ENCODE measurements at regions of chr17 and their contacts with region 1.

Region 1: DNA sequence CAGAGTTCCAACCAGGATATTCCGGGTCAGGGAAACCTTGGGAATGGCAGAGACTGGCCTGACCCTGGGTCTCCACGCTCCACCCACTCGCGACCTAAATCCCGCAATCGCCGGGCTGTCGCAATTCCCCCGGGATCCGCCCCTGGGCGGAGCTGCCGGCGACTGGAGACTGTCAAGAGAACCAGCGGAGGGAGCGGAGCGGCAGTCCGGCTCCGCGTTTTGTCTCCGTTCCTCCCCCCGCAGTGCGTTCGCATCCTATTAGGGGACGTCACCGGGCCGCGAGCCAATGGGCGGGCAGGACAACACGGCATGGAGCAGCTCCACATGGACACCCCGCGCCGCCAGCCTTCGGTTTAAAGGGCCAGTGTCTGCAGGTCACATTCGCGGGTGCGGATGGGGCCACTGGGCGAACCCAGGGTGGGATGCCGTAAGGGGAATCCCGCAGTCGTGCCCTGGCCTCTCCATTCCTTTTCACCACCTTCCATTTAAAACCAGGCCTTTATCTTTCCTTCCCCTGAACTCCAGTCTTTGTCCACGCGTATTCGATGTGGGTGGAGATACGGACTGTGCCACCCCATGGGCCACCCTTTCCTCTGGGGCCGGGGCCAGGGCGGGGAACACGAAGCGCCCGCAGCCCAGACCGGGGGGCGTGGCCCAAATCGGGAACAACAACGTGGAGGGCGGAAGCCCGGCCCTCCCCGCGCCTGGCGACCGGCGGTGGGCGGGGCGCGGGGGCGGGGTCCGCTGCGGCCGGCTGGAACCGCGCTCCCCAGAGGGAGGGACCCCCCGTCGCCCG is 764 bp upstream of the MNT start:
- DNase-seq: peak; percentile 100
- H3K4me3 Mint-ChIP-seq: peak overlapping the region; percentile 96
- H3K27ac Mint-ChIP-seq: peak overlapping the region; percentile 91
- H3K4me1 Mint-ChIP-seq: peaks cover 43% of the 10 kb centered on the region
- H3K27me3 Mint-ChIP-seq: no peaks in the 10 kb centered on the region

Region 2: GRCh38 chr17:2259769-2260536 is 141.7 kb before region 1 on chr17:
- CTCF ChIA-PET with region 1: no interaction called
- POLR2A ChIA-PET with region 1: no interaction called
- intact Hi-C with region 1: loop called (anchors 5 kb)
- DNase-seq: peak; percentile 90
- H3K4me3 Mint-ChIP-seq: peak overlapping the region; percentile 65
- H3K27ac Mint-ChIP-seq: peak overlapping the region; percentile 93
- H3K4me1 Mint-ChIP-seq: peaks cover 72% of the 10 kb centered on the region
- H3K27me3 Mint-ChIP-seq: no peaks in the 10 kb centered on the region

Region 3: GRCh38 chr17:2312736-2313135 is 88.9 kb before region 1 on chr17:
- CTCF ChIA-PET with region 1: no interaction called
- POLR2A ChIA-PET with region 1: no interaction called
- intact Hi-C with region 1: no loop called
- DNase-seq: no peak
- H3K4me3 Mint-ChIP-seq: no peak overlapping the region
- H3K27ac Mint-ChIP-seq: no peak overlapping the region
- H3K4me1 Mint-ChIP-seq: peaks cover 3% of the 10 kb centered on the region
- H3K27me3 Mint-ChIP-seq: no peaks in the 10 kb centered on the region

Region 4: DNA sequence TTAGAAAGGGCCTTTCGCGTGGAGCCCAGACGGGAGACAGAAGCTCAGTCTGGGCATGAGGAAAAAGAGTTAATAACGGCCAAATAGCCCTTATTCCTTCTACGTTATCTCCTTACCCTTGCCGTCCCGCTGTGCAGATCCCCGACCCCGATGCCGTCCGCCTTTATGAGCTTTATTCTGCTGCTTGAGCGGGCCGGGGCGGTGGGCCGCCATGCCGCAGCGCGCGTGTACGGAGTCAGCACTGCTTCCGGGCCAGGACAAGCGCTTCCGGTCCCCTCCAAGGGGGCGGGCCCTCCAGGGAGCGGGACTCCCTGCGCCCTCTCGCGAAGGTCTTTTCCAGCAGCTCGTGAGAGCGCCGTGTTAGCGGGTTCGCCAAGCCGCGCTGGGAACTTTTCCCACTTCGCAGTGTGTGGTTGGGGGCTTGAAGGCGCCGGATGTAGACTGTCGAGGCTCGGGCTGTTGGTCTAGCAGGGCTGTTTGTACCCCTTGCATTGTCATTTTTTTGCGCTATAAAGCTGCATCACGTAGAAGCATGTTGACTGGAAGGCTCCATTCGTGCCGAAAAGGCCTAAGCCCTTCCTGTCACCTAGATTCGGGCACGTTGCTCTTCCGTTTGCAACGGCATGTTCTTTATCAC is 65.3 kb before region 1 on chr17 and contains the start of gene TSR1:
- CTCF ChIA-PET with region 1: no interaction called
- POLR2A ChIA-PET with region 1: interaction called, 4 read pairs
- intact Hi-C with region 1: loop called (anchors 2 kb)
- DNase-seq: peak; percentile 94
- H3K4me3 Mint-ChIP-seq: peak within 1 kb of the TSS; percentile 100
- H3K27ac Mint-ChIP-seq: peak within 1 kb of the TSS; percentile 90
- H3K4me1 Mint-ChIP-seq: peaks cover 14% of the 10 kb centered on the region
- H3K27me3 Mint-ChIP-seq: no peaks in the 10 kb centered on the region
- total RNA-seq, gene TSR1: 55.1 to 55.9 TPM

Region 5: DNA sequence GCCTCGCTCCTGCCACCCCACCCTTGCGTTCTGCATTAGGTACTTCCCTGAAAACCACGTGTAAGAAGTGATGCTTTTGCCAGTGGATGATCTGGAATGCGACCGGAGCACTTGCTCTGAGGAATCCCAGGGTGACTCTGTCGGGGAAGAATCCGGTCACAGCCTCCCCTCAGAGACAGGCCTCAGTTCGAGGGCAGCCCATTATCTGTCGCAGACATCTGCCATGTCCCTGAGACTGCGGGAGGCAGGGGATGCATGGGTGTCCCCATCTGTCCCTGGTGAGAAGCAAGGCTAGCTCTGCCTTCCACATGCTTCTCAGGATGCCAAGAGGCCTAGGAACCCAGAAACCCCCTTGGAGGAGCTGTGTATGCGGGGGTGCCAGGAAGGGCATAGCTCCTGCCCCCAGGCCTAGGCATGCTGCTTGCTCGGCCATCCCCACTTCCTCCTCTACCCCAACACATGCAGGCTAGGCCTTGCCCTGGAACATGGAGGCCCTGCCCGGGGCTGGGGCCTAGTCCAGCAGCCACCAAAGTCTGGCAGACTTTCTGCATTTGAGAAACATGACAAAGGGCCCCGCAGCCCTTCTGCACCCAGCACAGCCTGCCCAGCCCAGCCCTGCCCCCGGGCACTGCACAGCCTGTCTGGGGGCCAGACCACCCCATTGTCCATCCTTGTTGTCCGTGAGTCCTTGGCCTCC is 21.2 kb before region 1 on chr17:
- CTCF ChIA-PET with region 1: interaction called, 71 read pairs
- POLR2A ChIA-PET with region 1: interaction called, 6 read pairs
- intact Hi-C with region 1: no loop called
- DNase-seq: no peak
- H3K4me3 Mint-ChIP-seq: no peak overlapping the region
- H3K27ac Mint-ChIP-seq: no peak overlapping the region
- H3K4me1 Mint-ChIP-seq: no peaks in the 10 kb centered on the region
- H3K27me3 Mint-ChIP-seq: no peaks in the 10 kb centered on the region

Region 6: GRCh38 chr17:2416010-2416734 is 14.5 kb after region 1 on chr17:
- CTCF ChIA-PET with region 1: interaction called, 98 read pairs
- POLR2A ChIA-PET with region 1: no interaction called
- intact Hi-C with region 1: no loop called
- DNase-seq: peak; percentile 91
- H3K4me3 Mint-ChIP-seq: no peak overlapping the region
- H3K27ac Mint-ChIP-seq: no peak overlapping the region
- H3K4me1 Mint-ChIP-seq: peaks cover 3% of the 10 kb centered on the region
- H3K27me3 Mint-ChIP-seq: no peaks in the 10 kb centered on the region

Region 7: DNA sequence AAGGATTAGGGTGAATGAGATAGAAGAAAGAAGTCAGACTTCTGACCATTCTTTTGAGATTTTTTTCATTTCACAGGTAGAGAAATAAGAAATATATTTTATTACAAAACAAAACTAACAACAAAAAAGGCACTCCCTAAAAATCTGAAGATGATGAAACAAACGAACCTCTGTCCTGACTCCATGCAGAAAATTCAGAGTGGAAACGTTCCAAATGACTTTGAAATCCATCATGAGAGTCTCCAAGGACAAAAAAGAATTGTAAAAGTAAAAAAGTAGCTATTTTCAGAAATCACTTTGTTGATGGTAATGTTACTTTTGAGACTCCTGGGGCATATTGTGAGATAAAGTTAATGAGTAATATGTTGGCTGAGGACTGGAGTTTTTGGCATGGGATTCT is 25.6 kb after region 1 on chr17:
- CTCF ChIA-PET with region 1: no interaction called
- POLR2A ChIA-PET with region 1: no interaction called
- intact Hi-C with region 1: no loop called
- DNase-seq: no peak
- H3K4me3 Mint-ChIP-seq: no peak overlapping the region
- H3K27ac Mint-ChIP-seq: no peak overlapping the region
- H3K4me1 Mint-ChIP-seq: no peaks in the 10 kb centered on the region
- H3K27me3 Mint-ChIP-seq: no peaks in the 10 kb centered on the region

Region 8: DNA sequence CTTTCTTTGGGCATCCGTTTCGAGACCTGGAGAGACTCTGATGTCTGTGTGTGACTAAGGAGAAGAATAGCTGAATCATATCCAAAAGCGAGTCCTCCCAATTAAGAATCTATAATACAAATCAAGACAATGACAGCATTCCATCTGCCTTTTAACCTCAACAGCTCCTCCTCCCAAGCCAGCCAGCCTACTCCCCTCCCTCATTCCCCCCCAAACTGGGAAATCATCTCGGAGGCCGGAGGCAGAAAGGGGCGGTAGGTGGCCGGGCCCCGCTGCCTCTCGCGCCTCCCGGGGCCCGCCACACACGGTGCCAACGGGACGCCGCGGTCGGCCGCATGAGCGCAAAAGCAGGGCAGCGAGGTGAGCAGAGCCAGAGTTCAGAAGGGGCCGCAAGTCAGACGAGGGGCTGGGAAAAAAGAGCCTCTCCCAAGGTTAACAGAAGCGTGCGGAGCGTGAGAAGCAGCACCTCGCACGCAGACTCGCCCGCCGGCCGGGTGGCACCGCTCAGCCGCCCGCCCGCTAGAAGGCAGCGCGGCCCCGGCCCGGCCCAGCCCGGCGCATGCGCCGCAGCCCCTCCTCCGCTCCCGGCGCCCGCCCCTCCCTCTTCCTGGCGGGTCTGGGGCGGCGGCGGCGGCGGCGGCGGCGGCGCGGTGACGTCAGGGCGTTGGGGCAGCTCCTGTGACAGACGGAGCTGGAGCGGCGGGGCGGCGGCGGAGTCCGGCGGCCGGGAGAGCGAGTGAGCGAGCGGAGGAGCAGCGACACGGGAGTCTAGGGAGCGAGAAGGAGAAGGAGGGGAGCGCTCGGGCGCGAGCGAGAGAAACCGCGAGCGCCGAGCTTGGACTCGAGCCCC is 191.6 kb after region 1 on chr17 and contains the start of gene PAFAH1B1:
- CTCF ChIA-PET with region 1: no interaction called
- POLR2A ChIA-PET with region 1: no interaction called
- intact Hi-C with region 1: loop called (anchors 5 kb)
- DNase-seq: peak; percentile 96
- H3K4me3 Mint-ChIP-seq: peak within 1 kb of the TSS; percentile 91
- H3K27ac Mint-ChIP-seq: peak within 1 kb of the TSS; percentile 83
- H3K4me1 Mint-ChIP-seq: peaks cover 27% of the 10 kb centered on the region
- H3K27me3 Mint-ChIP-seq: no peaks in the 10 kb centered on the region
- total RNA-seq, gene PAFAH1B1: 170 to 173 TPM

Measured in activated CD4-positive, alpha-beta memory T cell treated with anti-CD3 and anti-CD28 coated beads for 36 hours (primary cell).